ENCODE measurements at regions of chr20 and their contacts with region 1.

Region 1: DNA sequence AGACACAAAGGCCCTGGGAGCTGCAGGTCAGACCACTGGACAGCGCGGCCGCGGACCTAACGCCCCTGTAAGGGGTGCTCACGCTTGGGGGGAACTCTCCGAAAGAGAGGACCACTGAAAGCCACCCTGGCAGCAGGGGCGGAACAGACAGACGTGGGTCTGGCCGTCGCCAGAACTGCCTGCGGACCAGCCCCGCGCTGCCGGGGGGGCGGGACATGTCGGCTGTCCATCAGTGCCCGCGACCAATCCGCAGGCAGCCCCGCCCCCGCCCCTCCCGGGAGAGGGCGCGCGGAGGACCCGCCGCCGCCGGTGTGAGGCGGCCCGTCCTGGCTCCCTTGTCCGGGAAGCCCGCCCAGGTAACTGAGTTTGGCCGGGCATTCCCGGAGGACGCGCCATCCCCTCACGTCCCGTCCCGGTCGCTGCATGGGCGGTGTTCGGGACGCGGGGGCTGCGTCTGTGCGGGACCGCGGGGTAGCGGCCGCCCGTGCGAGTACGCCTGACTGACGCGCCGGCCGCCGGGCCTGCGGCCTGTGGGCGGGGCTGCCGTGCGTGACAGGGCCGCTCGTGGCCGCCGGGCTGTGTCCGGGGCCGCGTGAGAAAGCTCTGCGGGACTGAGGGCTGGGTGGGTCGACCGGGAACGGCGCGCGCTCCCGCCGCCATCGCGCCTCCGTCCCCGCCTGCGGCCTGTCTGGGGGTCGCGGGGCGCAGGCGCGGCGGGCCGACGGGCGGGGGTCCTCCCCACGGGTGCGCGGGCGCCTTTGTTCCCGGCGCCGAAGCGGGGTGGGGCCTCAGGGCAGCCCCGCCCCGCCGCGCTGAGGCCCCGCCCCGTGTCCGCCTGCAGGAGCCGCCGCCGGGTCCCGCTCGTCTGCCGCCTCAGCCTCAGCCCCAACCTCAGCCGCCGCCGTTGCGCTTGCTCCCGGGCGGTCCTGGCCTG is at the start of gene PLCG1:
- DNase-seq: peak; percentile 84
- H3K4me3 ChIP-seq: peak within 1 kb of the TSS; percentile 30 to 70 (median 68)
- H3K27ac ChIP-seq: peak within 1 kb of the TSS; percentile 81
- H3K4me1 ChIP-seq: peaks cover 38% of the 10 kb centered on the region
- H3K27me3 ChIP-seq: no peaks in the 10 kb centered on the region
- CTCF ChIP-seq: no peak
- POLR2A ChIP-seq: peak; percentile 70
- total RNA-seq, gene PLCG1: 219 and 224 TPM in 2 replicates

Region 2: GRCh38 chr20:41116282-41116956 is 20.5 kb before region 1 on chr20:
- CTCF ChIA-PET with region 1: interaction called, 12 read pairs
- POLR2A ChIA-PET with region 1: no interaction called
- dilution Hi-C with region 1: no loop called
- intact Hi-C with region 1: no loop called
- DNase-seq: no peak
- H3K4me3 ChIP-seq: no peak overlapping the region
- H3K27ac ChIP-seq: no peak overlapping the region
- H3K4me1 ChIP-seq: no peaks in the 10 kb centered on the region
- H3K27me3 ChIP-seq: no peaks in the 10 kb centered on the region
- CTCF ChIP-seq: no peak
- POLR2A ChIP-seq: no peak

Region 3: GRCh38 chr20:41161886-41162285 is 24.9 kb after region 1 on chr20:
- CTCF ChIA-PET with region 1: interaction called, 15 read pairs
- POLR2A ChIA-PET with region 1: no interaction called
- dilution Hi-C with region 1: no loop called
- intact Hi-C with region 1: loop called (anchors 1 kb)
- DNase-seq: no peak
- H3K4me3 ChIP-seq: no peak overlapping the region
- H3K27ac ChIP-seq: no peak overlapping the region
- H3K4me1 ChIP-seq: no peaks in the 10 kb centered on the region
- H3K27me3 ChIP-seq: no peaks in the 10 kb centered on the region
- CTCF ChIP-seq: peak in 1 of 2 donors; percentile 7
- POLR2A ChIP-seq: no peak

Region 4: DNA sequence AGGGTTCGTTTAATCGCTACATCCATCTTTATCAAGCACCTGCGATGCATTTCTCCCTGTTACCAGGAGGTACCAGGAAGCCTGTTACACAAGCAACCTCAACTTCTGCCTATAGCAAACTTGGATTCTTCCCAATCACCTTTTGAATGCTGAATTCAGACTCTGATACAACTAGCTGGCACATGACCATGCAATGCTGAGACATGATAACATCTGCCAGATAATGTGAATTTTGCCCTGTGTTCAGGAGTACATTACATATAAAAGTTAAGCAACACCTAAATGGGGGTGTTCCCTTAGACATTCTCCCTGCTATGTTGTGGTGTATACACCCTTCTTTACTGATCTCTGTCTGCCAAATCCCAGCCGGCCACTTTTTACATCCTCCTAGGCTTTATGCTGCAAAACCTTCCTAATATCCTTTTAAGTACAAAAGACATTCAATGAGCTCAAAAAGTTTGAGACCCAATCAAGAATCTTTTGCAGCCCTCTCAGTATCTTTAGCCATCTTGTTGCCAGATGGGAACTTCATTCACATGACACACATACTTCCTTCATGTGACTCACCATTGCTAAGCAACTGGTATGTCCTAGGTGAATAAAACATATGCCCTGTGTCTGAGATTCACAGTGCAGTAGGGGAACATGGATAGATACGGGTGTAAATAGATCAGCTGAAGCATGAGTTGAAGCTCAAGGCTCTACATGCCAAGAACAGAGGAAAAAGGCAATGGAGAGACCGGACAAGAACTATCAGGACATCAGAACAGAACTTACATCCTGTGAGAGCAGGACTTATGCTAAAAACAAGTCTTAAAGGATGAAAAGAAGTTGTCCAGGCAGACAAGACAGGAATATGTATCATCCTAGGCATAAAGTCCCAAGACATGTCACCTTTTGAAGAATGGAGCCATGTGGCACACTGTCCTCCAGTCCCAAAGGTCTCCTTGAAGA is 96.3 kb after region 1 on chr20:
- CTCF ChIA-PET with region 1: interaction called, 28 read pairs
- POLR2A ChIA-PET with region 1: no interaction called
- dilution Hi-C with region 1: no loop called
- intact Hi-C with region 1: loop called (anchors 1 kb)
- DNase-seq: peak; percentile 59
- H3K4me3 ChIP-seq: no peak overlapping the region
- H3K27ac ChIP-seq: peak overlapping the region; percentile 40
- H3K4me1 ChIP-seq: peaks cover 17% of the 10 kb centered on the region
- H3K27me3 ChIP-seq: no peaks in the 10 kb centered on the region
- CTCF ChIP-seq: no peak
- POLR2A ChIP-seq: no peak

Region 5: GRCh38 chr20:41339507-41340326 is 202.8 kb after region 1 on chr20:
- CTCF ChIA-PET with region 1: interaction called, 126 read pairs
- POLR2A ChIA-PET with region 1: no interaction called
- dilution Hi-C with region 1: no loop called
- intact Hi-C with region 1: loop called (anchors 1 kb)
- DNase-seq: peak; percentile 62
- H3K4me3 ChIP-seq: peak overlapping the region; percentile 18 to 65 (median 20)
- H3K27ac ChIP-seq: no peak overlapping the region
- H3K4me1 ChIP-seq: peaks cover 17% of the 10 kb centered on the region
- H3K27me3 ChIP-seq: no peaks in the 10 kb centered on the region
- CTCF ChIP-seq: peak; percentile 93 to 97
- POLR2A ChIP-seq: no peak

Region 6: DNA sequence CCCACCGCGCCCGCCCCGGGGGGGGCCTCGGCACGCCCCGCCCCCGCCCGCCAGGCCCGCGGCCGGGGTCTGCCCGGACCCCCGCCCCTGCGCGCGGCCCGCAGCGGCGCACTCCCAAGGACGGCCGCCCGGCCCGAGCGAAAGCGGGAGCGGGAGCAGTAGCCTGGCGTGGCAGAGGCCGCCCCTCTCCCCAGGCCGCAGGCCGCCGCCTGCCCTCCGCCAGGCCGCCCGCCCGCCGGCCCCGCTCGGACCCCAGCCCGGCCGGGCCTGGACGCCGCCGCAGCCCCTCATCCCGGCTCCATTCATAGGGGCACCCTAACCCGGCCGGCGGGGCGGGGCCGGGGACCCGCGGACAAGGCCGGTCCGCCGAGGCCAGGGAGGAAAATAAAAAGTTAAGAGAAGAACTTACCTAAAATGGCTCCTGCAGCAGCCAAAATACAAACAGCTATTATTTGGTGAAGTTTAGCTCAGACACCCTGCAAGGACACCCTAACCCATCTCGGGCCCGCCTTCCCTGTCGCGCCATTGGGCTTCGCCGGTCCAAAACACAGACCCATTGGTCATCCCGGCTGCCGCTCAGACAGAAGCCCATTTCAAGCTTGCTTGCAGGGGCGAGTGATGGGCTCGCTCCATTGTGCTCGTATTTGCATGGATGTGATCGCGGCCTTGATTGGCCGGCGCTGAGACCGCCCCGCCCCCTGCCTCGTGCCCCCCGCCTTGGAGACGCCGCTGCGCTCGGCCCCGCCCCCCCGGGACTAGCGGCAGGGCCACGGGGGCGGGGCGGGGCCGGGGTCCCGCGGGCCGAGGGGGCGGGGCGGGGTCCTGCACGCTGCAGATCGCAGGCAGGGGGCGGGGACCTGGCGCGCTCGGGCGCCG is 481.2 kb after region 1 on chr20 and contains the start of gene CHD6:
- CTCF ChIA-PET with region 1: no interaction called
- POLR2A ChIA-PET with region 1: no interaction called
- dilution Hi-C with region 1: no loop called
- intact Hi-C with region 1: loop called (anchors 5 kb)
- DNase-seq: peak; percentile 99
- H3K4me3 ChIP-seq: peak within 1 kb of the TSS; percentile 86 to 95 (median 90)
- H3K27ac ChIP-seq: peak within 1 kb of the TSS; percentile 67
- H3K4me1 ChIP-seq: peaks cover 8% of the 10 kb centered on the region
- H3K27me3 ChIP-seq: peaks cover 11 to 12% of the 10 kb centered on the region in 2 experiments
- CTCF ChIP-seq: no peak
- POLR2A ChIP-seq: no peak
- total RNA-seq, gene CHD6: 30.9 and 33.7 TPM in 2 replicates